ENCODE measurements at regions of chr7 and their contacts with region 1.

Region 1: DNA sequence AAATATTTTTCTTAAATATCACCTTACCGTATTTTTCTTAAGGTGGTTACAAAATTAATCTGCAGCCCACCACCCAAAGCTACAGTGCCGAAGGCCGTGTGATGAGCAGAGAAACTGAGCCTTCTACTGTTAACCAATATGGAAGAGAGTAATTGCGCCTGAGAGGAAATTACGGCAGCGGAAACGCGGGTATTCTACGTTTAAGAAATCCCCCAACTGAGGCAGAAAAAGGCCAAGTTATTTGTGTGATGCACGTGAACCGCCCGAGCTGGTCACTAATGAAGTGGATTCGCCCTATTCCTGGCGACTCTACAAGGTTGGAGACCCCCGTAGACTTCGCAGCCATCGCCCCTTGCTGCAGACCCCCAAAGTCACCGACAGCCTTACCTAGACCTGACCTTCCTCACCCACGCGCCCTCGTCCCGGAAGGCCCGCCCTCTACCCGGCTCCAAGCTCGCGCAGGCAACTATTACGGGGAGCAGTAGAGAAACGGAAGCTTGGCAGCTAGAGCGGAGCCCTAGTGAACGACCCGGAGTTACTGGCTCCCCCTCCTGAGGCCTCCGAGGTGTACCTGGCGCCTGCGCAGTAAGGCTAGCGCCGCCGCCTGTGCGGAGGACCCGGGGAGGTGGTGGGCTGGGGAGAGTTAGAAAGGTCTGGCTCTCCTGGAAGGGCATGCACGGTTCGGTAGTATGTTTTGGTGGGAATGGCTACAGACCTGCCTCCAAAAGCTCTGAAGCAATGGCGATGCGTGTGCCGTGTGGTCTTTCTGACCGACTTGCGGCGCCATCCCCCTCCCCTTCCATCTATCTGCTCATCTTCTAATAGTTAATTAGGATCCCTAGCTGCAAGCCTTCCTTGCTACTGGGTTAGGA is at the start of gene MRPS33:
- DNase-seq: peak; percentile 96 to 97
- H3K4me3 ChIP-seq: peak within 1 kb of the TSS; percentile 62
- H3K4me3 Mint-ChIP-seq: peak within 1 kb of the TSS; percentile 91
- H3K27ac Mint-ChIP-seq: peak within 1 kb of the TSS; percentile 95
- H3K4me1 ChIP-seq: no peaks in the 10 kb centered on the region
- H3K4me1 Mint-ChIP-seq: peaks cover 11% of the 10 kb centered on the region
- H3K27me3 ChIP-seq: no peaks in the 10 kb centered on the region
- H3K27me3 Mint-ChIP-seq: peaks cover 2% of the 10 kb centered on the region
- CTCF ChIP-seq: peak in 1 of 2 experiments; percentile 80
- total RNA-seq, gene MRPS33: 67.7 and 70.2 TPM in 2 replicates

Region 2: DNA sequence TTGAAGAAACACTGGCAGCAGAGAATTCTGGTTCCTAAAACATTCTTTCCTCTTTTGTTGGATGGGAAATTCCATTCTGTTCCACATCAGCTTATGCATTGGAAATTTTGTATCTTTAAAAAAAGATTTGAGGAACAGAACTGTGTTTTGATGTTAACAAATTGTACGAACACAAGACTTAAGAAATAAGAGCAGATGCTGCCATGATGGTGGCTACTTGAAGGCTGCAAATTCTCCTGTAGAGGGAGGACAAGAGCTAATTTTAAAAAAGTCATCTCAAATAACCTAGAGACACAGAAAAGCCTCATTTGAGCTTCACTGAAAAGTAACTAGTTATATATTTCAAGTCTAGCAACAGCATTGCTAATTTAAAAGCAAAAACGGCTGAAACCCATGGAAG is 288.5 kb before region 1 on chr7:
- CTCF ChIA-PET with region 1: interaction called, 7 read pairs
- POLR2A ChIA-PET with region 1: interaction called, 5 read pairs
- intact Hi-C with region 1: loop called (anchors 1 kb)
- DNase-seq: no peak
- H3K4me3 ChIP-seq: no peak overlapping the region
- H3K4me3 Mint-ChIP-seq: no peak overlapping the region
- H3K27ac Mint-ChIP-seq: no peak overlapping the region
- H3K4me1 ChIP-seq: no peaks in the 10 kb centered on the region
- H3K4me1 Mint-ChIP-seq: no peaks in the 10 kb centered on the region
- H3K27me3 ChIP-seq: no peaks in the 10 kb centered on the region
- H3K27me3 Mint-ChIP-seq: no peaks in the 10 kb centered on the region
- CTCF ChIP-seq: peak; percentile 47 to 50

Region 3: DNA sequence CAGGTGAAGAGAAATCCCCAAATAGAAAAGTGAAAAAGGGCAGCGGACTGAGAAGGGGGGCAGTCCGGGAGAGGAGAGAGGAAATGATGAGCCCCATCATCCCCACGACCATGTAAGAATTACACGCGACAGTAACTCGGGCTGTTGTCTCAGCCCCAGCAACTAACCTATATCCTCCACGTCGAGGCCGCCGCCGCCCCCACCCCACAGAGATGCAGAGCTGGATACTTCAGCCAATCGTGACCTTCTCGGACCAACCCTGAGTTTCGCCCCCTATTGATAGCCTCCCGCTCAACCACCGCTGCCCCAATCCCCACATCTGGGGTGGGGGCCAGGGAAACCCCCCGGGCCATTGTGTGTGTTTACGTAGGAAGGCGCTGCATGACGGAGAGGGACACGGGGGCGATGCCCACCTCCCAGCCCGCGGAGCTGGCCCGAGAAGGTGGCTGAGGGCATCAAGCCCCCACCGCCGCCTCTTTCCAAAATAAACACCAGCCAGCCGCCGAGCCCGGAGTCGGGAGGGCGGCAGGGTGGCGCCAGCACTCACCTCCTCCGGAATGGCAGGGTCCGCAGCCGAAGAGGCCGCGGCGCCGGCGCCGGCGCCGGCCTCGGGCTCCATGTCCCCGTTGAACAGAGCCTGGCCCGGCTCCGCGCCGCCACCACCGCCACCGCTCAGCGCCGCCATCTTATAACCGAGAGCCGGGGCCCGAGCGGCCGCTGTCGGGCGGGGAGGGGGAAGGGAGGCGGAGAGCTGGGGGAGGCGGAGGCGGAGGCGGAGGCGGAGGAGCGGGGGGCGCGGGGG is 90.5 kb before region 1 on chr7:
- CTCF ChIA-PET with region 1: interaction called, 5 read pairs
- POLR2A ChIA-PET with region 1: interaction called, 3 read pairs
- intact Hi-C with region 1: loop called (anchors 1 kb)
- DNase-seq: peak; percentile 81 to 83
- H3K4me3 ChIP-seq: peak overlapping the region; percentile 71
- H3K4me3 Mint-ChIP-seq: no peak overlapping the region
- H3K27ac Mint-ChIP-seq: no peak overlapping the region
- H3K4me1 ChIP-seq: no peaks in the 10 kb centered on the region
- H3K4me1 Mint-ChIP-seq: no peaks in the 10 kb centered on the region
- H3K27me3 ChIP-seq: no peaks in the 10 kb centered on the region
- H3K27me3 Mint-ChIP-seq: no peaks in the 10 kb centered on the region
- CTCF ChIP-seq: peak; percentile 47 to 57

Region 4: GRCh38 chr7:140972876-140973859 is 41.6 kb before region 1 on chr7:
- CTCF ChIA-PET with region 1: no interaction called
- POLR2A ChIA-PET with region 1: no interaction called
- intact Hi-C with region 1: no loop called
- DNase-seq: peak; percentile 25 to 45
- H3K4me3 ChIP-seq: no peak overlapping the region
- H3K4me3 Mint-ChIP-seq: no peak overlapping the region
- H3K27ac Mint-ChIP-seq: peak overlapping the region; percentile 4
- H3K4me1 ChIP-seq: peaks cover 33% of the 10 kb centered on the region
- H3K4me1 Mint-ChIP-seq: peaks cover 33% of the 10 kb centered on the region
- H3K27me3 ChIP-seq: no peaks in the 10 kb centered on the region
- H3K27me3 Mint-ChIP-seq: no peaks in the 10 kb centered on the region
- CTCF ChIP-seq: no peak

Region 5: GRCh38 chr7:141027043-141027442 is 12.3 kb after region 1 on chr7:
- CTCF ChIA-PET with region 1: no interaction called
- POLR2A ChIA-PET with region 1: no interaction called
- intact Hi-C with region 1: loop called (anchors 2 kb)
- DNase-seq: no peak
- H3K4me3 ChIP-seq: no peak overlapping the region
- H3K4me3 Mint-ChIP-seq: no peak overlapping the region
- H3K27ac Mint-ChIP-seq: no peak overlapping the region
- H3K4me1 ChIP-seq: peaks cover 4% of the 10 kb centered on the region
- H3K4me1 Mint-ChIP-seq: no peaks in the 10 kb centered on the region
- H3K27me3 ChIP-seq: no peaks in the 10 kb centered on the region
- H3K27me3 Mint-ChIP-seq: peaks cover 12% of the 10 kb centered on the region
- CTCF ChIP-seq: no peak

Measured in Caco-2 (cell line).